Activated naive CD4-positive, alpha-beta T cell treated with anti-CD3 and anti-CD28 coated beads for 36 hours (primary cell): ENCODE measurements at regions of chr11 and their contacts with region 1.

Region 1: GRCh38 chr11:910589-911195 is at the start of gene CHID1:
- DNase-seq: peak; percentile 87
- H3K4me3 Mint-ChIP-seq: peak within 1 kb of the TSS; percentile 91
- H3K27ac Mint-ChIP-seq: peak within 1 kb of the TSS; percentile 65
- H3K4me1 Mint-ChIP-seq: peaks cover 24% of the 10 kb centered on the region
- H3K27me3 Mint-ChIP-seq: no peaks in the 10 kb centered on the region
- total RNA-seq, gene CHID1: 51.8 to 56.3 TPM

Region 2: DNA sequence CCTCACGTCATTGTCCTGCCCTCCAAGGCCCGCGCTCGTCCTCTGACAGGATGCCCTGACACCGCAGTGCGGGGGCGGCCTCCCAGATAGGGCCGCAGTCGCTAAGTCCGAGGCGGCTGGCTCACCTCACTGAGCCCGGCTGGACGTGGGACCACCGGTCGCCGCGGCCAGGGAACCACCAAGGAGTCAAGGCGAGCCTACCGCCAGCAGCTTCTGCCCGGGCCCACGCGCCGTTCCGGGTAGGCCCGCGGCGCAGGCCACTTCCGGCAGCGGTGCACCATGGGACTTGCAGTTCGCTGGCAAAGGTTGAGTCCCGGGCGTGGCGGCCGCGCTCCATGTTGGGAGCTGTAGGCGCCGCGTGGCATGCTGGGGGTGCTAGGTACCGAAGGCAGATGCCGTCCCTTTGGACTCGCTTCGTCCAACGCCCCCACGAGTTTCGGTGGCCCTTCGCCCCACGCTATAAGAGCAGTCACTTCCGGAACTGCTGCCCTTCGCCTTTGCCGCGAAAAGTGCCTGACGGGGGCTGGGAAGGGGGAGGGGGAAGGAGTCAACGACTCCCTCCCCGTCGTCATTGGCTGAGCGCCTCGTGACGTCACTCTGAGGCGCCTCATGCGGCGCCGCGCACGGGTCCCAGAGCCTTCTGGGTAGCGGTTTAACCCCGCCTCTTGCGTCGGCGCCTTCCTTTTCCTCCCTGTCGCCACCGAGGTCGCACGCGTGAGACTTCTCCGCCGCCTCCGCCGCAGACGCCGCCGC is 101.2 kb before region 1 on chr11 and contains the start of gene RPLP2:
- CTCF ChIA-PET with region 1: no interaction called
- intact Hi-C with region 1: loop called (anchors 1 kb)
- DNase-seq: peak; percentile 99
- H3K4me3 Mint-ChIP-seq: peak within 1 kb of the TSS; percentile 84
- H3K27ac Mint-ChIP-seq: peak within 1 kb of the TSS; percentile 97
- H3K4me1 Mint-ChIP-seq: peaks cover 33% of the 10 kb centered on the region
- H3K27me3 Mint-ChIP-seq: no peaks in the 10 kb centered on the region
- total RNA-seq, gene RPLP2: 3,807 to 3,940 TPM

Region 3: GRCh38 chr11:876519-876918 is 34.2 kb before region 1 on chr11:
- CTCF ChIA-PET with region 1: no interaction called
- intact Hi-C with region 1: no loop called
- DNase-seq: no peak
- H3K4me3 Mint-ChIP-seq: no peak overlapping the region
- H3K27ac Mint-ChIP-seq: no peak overlapping the region
- H3K4me1 Mint-ChIP-seq: no peaks in the 10 kb centered on the region
- H3K27me3 Mint-ChIP-seq: no peaks in the 10 kb centered on the region